GM10248 (cell line): ENCODE measurements at regions of chr5 and their contacts with region 1.

Region 1: DNA sequence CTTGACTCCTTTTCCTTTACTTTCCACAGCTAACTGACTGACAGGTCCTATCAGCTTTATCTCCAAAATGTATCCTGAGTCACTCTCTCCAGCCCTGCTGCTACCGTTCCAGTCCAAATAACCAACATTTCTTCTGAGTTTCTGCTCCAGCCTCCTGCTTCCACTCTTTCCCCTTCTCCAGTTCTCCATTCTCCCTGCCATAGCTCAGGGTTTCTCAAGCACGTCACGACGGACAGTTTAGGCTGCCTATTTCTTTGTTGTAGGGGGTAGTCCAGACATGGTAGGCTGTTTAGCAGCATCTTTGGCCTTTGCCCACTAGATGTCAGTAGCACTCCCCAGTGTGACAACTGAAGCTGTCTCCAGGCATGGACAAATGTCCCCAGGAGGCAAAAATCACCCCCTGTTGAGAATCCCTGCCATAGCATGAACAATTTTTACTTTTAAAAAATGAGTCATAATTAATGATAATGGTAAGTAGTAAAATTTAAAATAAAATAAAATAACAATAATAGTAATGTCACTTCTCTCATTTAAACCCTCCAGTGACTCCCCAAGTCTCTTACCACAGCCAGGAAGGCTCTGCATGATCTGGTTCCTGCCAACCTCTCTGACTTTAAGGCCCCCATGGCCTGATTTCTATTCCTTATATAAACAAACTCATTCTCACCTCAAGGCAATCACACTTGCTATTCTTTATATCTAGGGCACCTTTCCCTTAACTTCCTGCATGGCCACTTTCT is 105.4 kb upstream of the FER start:
- DNase-seq: peak; percentile 69
- CTCF ChIP-seq: peak; percentile 88

Region 2: DNA sequence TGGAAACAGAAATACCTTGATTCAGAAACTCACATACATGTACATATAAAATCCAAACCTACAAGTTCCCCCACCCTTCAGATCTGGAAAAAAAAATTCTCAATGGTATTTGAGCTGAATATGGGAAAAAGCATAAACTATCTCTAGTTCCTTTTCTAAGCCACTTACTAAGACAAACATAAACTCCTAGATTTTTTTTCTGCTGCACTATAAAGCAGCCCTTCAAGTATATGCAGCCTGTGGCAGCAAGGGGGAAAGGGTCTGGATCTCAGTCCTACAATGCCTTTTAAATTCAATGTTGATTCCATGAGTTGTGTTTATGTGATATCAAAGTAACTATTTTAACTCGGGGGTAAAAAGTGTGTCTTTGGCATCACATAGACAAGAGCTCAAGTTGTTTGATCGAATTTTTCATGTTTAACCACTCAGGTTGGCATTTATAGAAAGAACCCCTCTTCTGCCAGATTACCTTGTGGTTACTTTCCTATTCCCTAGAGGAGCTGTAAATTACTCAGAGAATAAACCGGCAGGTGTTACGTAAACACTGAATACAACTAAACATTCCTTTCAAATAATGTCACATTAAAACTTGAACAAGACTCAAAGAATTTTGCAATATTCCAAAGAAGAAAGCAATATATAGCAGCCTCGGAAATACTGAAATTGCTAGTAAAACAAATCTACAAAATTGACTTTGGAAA is 13.6 kb after region 1 on chr5:
- CTCF ChIA-PET with region 1: interaction called, 24 read pairs
- POLR2A ChIA-PET with region 1: no interaction called
- DNase-seq: no peak
- CTCF ChIP-seq: no peak

Region 3: DNA sequence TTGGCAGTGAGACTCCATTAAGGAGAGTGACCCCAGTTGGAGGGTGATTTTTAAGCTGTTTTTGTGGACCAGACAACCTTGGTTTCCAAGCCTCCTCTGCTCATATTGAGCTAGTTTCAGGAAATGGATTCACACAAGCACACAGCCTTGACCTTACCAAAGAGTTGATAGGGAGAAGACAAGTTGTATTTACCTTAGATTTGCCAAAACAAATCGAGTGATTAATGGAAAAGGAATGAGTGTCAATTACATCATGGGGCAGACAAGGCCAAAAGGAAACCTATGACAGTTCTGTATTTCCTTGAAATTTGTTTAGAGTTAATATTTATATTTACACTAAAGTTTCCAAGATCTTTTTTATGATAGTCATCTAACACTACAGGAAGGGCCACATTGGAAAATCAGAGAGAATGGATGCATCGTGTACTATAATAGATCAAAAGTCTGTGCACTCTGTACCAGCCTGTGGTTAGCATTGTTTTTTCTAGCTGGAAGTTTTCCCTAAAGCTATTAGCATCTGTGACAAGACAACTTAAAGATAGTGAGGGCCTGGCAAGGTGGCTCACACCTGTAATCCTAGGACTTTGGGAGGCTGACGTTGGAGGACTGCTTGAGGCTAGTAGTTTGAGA is 19.4 kb after region 1 on chr5:
- CTCF ChIA-PET with region 1: interaction called, 24 read pairs
- POLR2A ChIA-PET with region 1: no interaction called
- DNase-seq: no peak
- CTCF ChIP-seq: no peak

Region 4: DNA sequence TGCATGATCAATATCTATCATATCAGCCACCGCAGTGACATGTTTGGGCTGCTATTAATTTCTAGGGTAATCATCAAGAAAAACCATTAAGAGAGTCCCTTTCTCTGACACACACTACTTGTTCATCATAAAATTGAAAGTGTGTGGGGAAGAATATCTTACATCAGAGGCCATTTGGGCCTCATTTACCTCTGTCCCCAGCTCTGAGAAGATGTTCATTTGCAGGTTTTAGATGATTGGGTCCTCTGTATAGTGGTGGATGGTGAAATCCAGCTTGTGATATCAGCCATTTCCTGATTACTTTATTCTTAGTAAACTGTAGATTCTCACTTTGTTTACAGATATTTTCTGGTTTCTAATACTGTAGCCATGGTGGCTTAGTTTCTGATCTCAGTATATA is 797.3 kb after region 1 on chr5:
- CTCF ChIA-PET with region 1: interaction called, 13 read pairs
- POLR2A ChIA-PET with region 1: no interaction called
- DNase-seq: no peak
- CTCF ChIP-seq: no peak

Region 5: GRCh38 chr5:109468737-109469420 is 826.5 kb after region 1 on chr5:
- CTCF ChIA-PET with region 1: interaction called, 11 read pairs
- POLR2A ChIA-PET with region 1: no interaction called
- DNase-seq: peak; percentile 73
- CTCF ChIP-seq: peak; percentile 83